Transverse colon (tissue), 4 donors: ENCODE measurements at regions of chr6 and their contacts with region 1.

Region 1: GRCh38 chr6:17584241-17584803 is 15.8 kb upstream of the FAM8A1 start:
- DNase-seq: no peak
- H3K4me3 ChIP-seq: peak overlapping the region in 1 of 4 donors; percentile 21
- H3K27ac ChIP-seq: peak overlapping the region; percentile 58 to 81 (median 73)
- H3K4me1 ChIP-seq: peaks cover 5 to 40% (median 16%) of the 10 kb centered on the region in 4 donors
- H3K27me3 ChIP-seq: no peaks in the 10 kb centered on the region
- CTCF ChIP-seq: peak; percentile 71 to 95 (median 77)
- EP300 ChIP-seq: no peak
- POLR2A ChIP-seq: no peak

Region 2: DNA sequence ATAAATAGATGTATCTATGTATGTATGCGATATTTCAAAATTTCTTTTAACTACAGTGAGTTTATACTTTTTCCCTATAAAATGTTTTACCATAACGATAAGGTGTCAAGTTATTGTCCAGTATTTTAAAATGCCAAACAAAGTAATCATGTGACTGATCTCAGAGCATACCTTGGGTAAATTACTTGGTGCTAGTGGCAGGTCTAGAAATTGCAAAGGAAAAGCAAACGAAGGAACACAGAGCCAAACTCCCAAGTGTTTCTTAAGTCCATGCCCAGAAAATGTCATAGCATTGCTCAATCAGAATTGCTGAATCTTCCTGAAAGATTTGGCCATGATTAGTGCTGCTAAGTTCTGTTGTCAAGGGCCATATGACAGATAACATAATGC is 113.4 kb before region 1 on chr6:
- in situ Hi-C with region 1: no loop called
- intact Hi-C with region 1: loop called (anchors 10 kb)
- DNase-seq: no peak
- H3K4me3 ChIP-seq: no peak overlapping the region
- H3K27ac ChIP-seq: peak overlapping the region; percentile 69 to 85 (median 71)
- H3K4me1 ChIP-seq: peaks cover 18 to 49% (median 24%) of the 10 kb centered on the region in 4 donors
- H3K27me3 ChIP-seq: no peaks in the 10 kb centered on the region
- CTCF ChIP-seq: peak in 3 of 5 experiments; percentile 16 to 46 (median 19)
- EP300 ChIP-seq: peak; percentile 17
- POLR2A ChIP-seq: no peak